Transverse colon (tissue), 4 donors: ENCODE measurements at regions of chr17 and their contacts with region 1.

Region 1: GRCh38 chr17:79393358-79394202 is 217.3 kb downstream of the RBFOX3 start:
- DNase-seq: peak; percentile 80
- H3K4me3 ChIP-seq: no peak overlapping the region
- H3K27ac ChIP-seq: no peak overlapping the region
- H3K4me1 ChIP-seq: no peaks in the 10 kb centered on the region
- H3K27me3 ChIP-seq: peaks cover 49% of the 10 kb centered on the region
- CTCF ChIP-seq: peak; percentile 75 to 92 (median 87)
- EP300 ChIP-seq: no peak
- POLR2A ChIP-seq: no peak

Region 2: GRCh38 chr17:79053251-79053925 is 340.2 kb before region 1 on chr17:
- in situ Hi-C with region 1: loop called in 3 of 4 experiments (anchors 10 to 25 kb)
- intact Hi-C with region 1: no loop called
- DNase-seq: no peak
- H3K4me3 ChIP-seq: no peak overlapping the region
- H3K27ac ChIP-seq: no peak overlapping the region
- H3K4me1 ChIP-seq: no peaks in the 10 kb centered on the region
- H3K27me3 ChIP-seq: no peaks in the 10 kb centered on the region
- CTCF ChIP-seq: no peak
- EP300 ChIP-seq: no peak
- POLR2A ChIP-seq: no peak

Region 3: DNA sequence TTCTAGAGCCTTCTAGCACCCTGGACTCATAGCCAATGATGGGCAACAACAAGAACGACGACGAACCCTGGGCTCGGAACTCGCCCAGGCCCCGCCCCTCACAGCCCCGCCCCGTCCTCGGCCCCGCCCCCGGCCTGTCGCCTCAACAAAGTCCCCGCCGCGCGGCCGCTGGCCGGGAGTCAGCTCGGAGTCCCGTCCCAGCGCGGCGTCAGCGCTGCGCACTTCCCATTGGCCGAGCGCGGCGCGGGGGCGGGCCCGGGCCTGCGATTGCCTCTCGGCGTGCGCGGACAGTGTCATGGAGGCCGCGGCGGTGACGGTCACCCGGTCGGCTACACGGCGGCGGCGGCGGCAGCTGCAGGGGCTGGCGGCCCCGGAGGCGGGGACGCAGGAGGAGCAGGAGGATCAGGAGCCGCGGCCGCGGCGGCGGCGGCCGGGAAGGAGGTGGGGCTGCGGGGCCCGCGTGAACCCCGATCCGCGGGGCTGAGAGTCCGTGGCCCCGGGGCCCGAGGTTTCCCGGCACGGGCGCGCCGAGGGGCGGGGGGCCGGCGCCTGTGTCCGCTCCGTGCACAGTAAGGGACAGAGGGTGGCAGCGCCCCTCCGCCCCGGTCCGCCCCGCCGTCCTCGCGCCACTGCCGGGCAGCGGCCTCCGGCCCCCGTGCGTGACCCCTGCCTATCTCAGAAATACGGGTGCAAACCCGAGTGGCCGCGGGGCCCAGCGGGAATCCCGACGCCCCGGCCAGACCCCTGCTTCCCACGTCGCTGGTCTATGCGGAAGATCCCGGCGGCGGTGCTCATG is 318.7 kb before region 1 on chr17 and contains the start of gene ENGASE:
- in situ Hi-C with region 1: loop called in 2 of 4 experiments (anchors 25 kb)
- intact Hi-C with region 1: no loop called
- DNase-seq: peak; percentile 96
- H3K4me3 ChIP-seq: peak within 1 kb of the TSS; percentile 87 to 99 (median 93)
- H3K27ac ChIP-seq: peak within 1 kb of the TSS; percentile 90 to 96 (median 94)
- H3K4me1 ChIP-seq: peaks cover 21 to 51% (median 35%) of the 10 kb centered on the region in 4 donors
- H3K27me3 ChIP-seq: no peaks in the 10 kb centered on the region
- CTCF ChIP-seq: no peak
- EP300 ChIP-seq: no peak
- POLR2A ChIP-seq: peak; percentile 46
- total RNA-seq, gene ENGASE: 74.7 to 335 (median 121) TPM

Region 4: GRCh38 chr17:79087428-79088143 is 306.0 kb before region 1 on chr17:
- in situ Hi-C with region 1: no loop called
- intact Hi-C with region 1: loop called (anchors 5 kb)
- DNase-seq: peak; percentile 76
- H3K4me3 ChIP-seq: no peak overlapping the region
- H3K27ac ChIP-seq: no peak overlapping the region
- H3K4me1 ChIP-seq: peaks cover 0 to 13% (median 3%) of the 10 kb centered on the region in 4 donors
- H3K27me3 ChIP-seq: peaks cover 26% of the 10 kb centered on the region
- CTCF ChIP-seq: peak; percentile 89 to 96 (median 93)
- EP300 ChIP-seq: no peak
- POLR2A ChIP-seq: no peak

Region 5: DNA sequence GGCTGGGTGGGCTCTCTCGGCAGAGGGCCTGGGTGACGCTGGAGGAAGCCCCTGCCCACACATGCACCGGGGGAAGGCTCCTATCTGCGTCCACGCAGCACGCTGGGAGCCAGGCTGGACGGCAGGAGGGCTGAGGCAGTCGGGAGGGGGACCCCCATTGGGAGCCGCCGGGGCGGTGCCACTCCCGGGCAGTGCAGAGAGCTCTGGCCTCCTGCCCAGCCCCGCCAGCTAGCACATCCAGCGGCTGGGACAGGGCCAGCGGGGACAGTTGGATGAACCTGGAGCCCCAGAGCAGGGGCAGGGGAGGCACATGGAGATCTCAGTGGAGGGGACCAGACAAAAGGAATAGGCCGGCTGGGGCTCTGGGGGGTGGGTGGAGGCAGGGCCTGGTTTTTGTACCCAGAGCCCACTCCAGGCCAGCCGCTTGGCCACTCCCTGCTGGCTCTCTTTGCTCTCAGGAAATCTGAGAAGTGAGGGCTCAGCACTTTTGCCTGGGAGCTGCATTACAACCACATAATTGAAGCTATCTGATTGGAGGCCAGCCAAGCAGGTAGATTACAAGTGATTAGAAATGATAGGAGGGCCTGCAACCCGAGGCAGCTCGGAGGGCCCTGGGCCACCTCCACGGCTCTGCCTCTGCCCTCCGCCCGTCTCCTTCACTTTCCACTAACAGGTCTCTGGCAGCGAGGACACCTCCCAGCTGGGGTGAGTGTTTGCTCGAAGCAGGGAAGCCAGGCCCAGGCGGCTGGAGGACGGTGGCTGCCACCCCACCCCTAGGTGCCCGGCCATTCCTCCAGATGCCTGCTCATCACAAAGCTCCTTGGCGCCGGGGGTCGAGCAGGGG is 278.9 kb before region 1 on chr17:
- in situ Hi-C with region 1: loop called in 1 of 4 experiments (anchors 25 kb)
- intact Hi-C with region 1: no loop called
- DNase-seq: peak; percentile 64
- H3K4me3 ChIP-seq: no peak overlapping the region
- H3K27ac ChIP-seq: peak overlapping the region in 1 of 4 donors; percentile 27
- H3K4me1 ChIP-seq: peaks cover 3 to 23% (median 19%) of the 10 kb centered on the region in 4 donors
- H3K27me3 ChIP-seq: peaks cover 29% of the 10 kb centered on the region
- CTCF ChIP-seq: no peak
- EP300 ChIP-seq: no peak
- POLR2A ChIP-seq: no peak

Region 6: GRCh38 chr17:79558091-79558895 is 164.7 kb after region 1 on chr17:
- in situ Hi-C with region 1: no loop called
- intact Hi-C with region 1: no loop called
- DNase-seq: no peak
- H3K4me3 ChIP-seq: no peak overlapping the region
- H3K27ac ChIP-seq: no peak overlapping the region
- H3K4me1 ChIP-seq: no peaks in the 10 kb centered on the region
- H3K27me3 ChIP-seq: peaks cover 14% of the 10 kb centered on the region
- CTCF ChIP-seq: no peak
- EP300 ChIP-seq: no peak
- POLR2A ChIP-seq: no peak

Region 7: DNA sequence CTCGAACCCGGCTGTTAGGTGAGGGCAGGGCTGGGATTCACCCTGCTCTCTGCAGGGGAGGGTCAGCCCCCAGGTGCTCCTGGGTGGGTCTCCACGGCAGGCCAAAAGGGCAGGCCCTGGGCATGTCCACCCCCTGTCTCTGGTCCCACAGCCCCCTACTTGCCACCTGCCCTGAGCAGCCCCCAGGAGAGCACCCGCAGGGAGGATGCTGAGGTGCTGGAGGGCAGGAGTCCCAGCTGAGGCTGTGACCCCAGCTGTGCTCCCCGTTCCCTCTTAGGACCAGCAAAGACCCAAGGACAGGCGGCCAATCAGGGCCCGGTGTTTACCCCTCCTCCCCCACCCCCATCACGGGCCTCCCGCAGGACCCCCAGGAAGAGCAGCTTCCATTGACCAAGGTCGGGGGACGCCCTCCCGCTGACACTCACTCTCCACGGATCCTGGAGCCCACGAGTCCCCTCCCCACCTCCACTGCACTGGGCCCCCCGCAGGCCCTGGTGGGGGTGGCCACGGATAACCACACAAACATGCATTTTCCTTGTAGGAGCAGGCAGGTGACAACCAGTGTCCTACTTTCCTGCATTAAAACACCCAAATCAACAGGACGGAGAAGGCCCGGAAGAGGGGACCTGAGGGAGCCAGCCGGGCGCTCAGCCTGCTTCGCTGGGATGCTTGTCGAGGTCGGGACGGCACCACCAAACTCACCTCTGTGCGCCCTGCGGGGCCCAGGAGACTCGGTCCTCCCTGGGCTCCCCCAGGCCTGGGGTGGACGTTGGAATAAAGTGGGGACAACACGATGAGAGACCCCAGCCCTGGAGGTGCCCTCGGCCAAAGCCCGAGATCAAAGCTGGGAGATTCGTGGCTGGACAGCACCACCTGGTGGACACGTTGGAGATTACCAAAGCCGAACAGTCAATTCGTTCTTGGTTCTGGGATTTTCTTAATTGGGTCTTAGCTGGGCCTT is 314.6 kb after region 1 on chr17:
- in situ Hi-C with region 1: no loop called
- intact Hi-C with region 1: loop called (anchors 10 kb)
- DNase-seq: peak; percentile 54
- H3K4me3 ChIP-seq: peak overlapping the region in 1 of 4 donors; percentile 15
- H3K27ac ChIP-seq: no peak overlapping the region
- H3K4me1 ChIP-seq: peaks cover 0 to 10% (median 2%) of the 10 kb centered on the region in 4 donors
- H3K27me3 ChIP-seq: no peaks in the 10 kb centered on the region
- CTCF ChIP-seq: peak; percentile 74 to 85 (median 78)
- EP300 ChIP-seq: no peak
- POLR2A ChIP-seq: no peak